B cell (primary cell): ENCODE measurements at regions of chr13 and their contacts with region 1.

Region 1: GRCh38 chr13:19959831-19960652 is 1.5 kb downstream of the ZMYM2 start:
- DNase-seq: peak; percentile 92
- ATAC-seq: peak; percentile 44
- H3K4me3 ChIP-seq: peak overlapping the region; percentile 78 to 90 (median 85)
- H3K4me3 Mint-ChIP-seq: peak overlapping the region; percentile 99
- H3K27ac ChIP-seq: peak overlapping the region; percentile 90 to 96
- H3K27ac Mint-ChIP-seq: peak overlapping the region; percentile 99
- H3K4me1 ChIP-seq: peaks cover 8 to 15% of the 10 kb centered on the region in 2 donors
- H3K4me1 Mint-ChIP-seq: peaks cover 31% of the 10 kb centered on the region
- H3K27me3 ChIP-seq: no peaks in the 10 kb centered on the region
- H3K27me3 Mint-ChIP-seq: no peaks in the 10 kb centered on the region
- CTCF ChIP-seq: peak; percentile 87

Region 2: DNA sequence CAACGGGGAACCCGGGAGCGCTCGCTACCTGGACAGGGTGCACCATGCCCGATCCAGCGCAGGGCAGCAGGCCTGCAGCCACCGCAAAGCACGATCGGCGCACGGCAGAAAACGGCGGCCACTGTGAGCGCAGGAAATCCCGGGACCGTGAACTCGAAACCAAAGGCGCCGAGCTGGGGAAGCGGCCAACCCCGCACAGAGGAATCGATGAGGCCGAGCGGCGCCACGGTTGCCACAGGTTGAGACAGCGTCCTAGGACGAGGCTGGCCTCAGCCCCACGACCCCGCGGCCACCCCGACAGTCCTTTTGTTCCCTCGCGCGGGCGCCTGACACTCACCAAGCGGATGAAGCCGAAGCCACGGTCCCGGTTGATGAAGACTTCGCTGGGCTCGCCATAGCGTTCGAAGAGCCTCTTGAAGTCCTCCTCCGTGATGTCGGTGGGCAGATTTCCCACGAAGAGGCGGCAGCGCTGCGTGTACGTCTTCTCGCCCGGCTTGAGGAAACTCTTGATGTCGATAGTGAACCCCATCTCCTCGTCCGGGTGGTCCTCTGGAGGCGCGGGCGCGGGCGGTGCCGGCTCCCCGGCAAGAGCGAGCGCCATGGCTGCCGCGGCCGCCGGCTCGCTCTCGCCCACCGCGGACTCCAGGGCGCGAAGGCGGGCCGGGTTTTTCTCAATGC is 177.9 kb before region 1 on chr13:
- CTCF ChIA-PET with region 1: interaction called, 3 read pairs
- POLR2A ChIA-PET with region 1: interaction called, 5 read pairs
- intact Hi-C with region 1: loop called (anchors 2 kb)
- DNase-seq: peak; percentile 71
- ATAC-seq: peak; percentile 62
- H3K4me3 ChIP-seq: peak overlapping the region; percentile 91 to 98 (median 98)
- H3K4me3 Mint-ChIP-seq: peak overlapping the region; percentile 98
- H3K27ac ChIP-seq: peak overlapping the region; percentile 88 to 92
- H3K27ac Mint-ChIP-seq: peak overlapping the region; percentile 100
- H3K4me1 ChIP-seq: peaks cover 5 to 10% of the 10 kb centered on the region in 2 donors
- H3K4me1 Mint-ChIP-seq: peaks cover 10% of the 10 kb centered on the region
- H3K27me3 ChIP-seq: no peaks in the 10 kb centered on the region
- H3K27me3 Mint-ChIP-seq: no peaks in the 10 kb centered on the region
- CTCF ChIP-seq: no peak

Region 3: GRCh38 chr13:19927117-19927748 is 32.8 kb before region 1 on chr13:
- CTCF ChIA-PET with region 1: interaction called, 17 read pairs
- POLR2A ChIA-PET with region 1: no interaction called
- intact Hi-C with region 1: loop called (anchors 1 kb)
- DNase-seq: peak; percentile 57
- ATAC-seq: peak; percentile 49
- H3K4me3 ChIP-seq: no peak overlapping the region
- H3K4me3 Mint-ChIP-seq: no peak overlapping the region
- H3K27ac ChIP-seq: no peak overlapping the region
- H3K27ac Mint-ChIP-seq: no peak overlapping the region
- H3K4me1 ChIP-seq: no peaks in the 10 kb centered on the region
- H3K4me1 Mint-ChIP-seq: no peaks in the 10 kb centered on the region
- H3K27me3 ChIP-seq: no peaks in the 10 kb centered on the region
- H3K27me3 Mint-ChIP-seq: peaks cover 3% of the 10 kb centered on the region
- CTCF ChIP-seq: peak; percentile 59

Region 4: DNA sequence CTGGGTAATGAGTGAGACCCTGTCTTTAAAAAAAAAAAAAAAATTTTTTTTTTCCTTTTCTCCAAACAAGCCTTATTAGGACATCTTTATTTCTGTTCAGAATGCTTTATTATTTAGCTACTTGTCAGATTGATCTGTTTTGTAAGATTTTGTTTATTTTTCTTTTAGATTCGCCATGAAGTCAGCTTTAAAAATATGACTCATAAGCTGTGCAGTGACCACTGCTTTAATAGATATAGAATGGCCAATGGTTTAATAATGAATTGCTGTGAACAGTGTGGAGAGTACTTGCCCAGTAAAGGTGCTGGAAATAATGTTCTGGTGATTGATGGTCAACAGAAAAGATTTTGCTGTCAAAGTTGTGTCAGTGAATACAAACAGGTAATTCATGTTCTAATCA is 46.2 kb after region 1 on chr13:
- CTCF ChIA-PET with region 1: no interaction called
- POLR2A ChIA-PET with region 1: no interaction called
- intact Hi-C with region 1: no loop called
- DNase-seq: no peak
- ATAC-seq: no peak
- H3K4me3 ChIP-seq: no peak overlapping the region
- H3K4me3 Mint-ChIP-seq: no peak overlapping the region
- H3K27ac ChIP-seq: no peak overlapping the region
- H3K27ac Mint-ChIP-seq: no peak overlapping the region
- H3K4me1 ChIP-seq: no peaks in the 10 kb centered on the region
- H3K4me1 Mint-ChIP-seq: peaks cover 4% of the 10 kb centered on the region
- H3K27me3 ChIP-seq: no peaks in the 10 kb centered on the region
- H3K27me3 Mint-ChIP-seq: no peaks in the 10 kb centered on the region
- CTCF ChIP-seq: no peak